Gastrocnemius medialis (tissue), 4 donors: ENCODE measurements at regions of chr2 and their contacts with region 1.

Region 1: DNA sequence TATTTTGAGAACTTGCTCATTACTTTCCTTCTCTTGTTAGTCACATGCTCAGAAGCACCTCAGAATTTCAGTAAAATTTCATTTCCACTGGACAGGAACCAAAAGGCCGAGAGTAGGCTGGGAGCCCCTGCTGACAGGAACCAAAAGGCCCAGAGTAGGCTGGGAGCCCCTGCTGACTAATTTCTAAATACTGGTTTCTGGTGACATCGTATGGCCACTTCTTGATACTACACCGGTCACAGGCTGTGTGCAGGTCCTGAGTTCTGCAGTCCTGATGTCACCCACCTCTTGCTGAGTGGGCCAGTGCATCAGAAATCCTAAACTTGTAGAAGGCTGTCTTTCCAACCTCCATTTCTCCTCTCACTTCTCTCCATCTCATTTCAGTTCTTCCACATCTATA is 17.7 kb upstream of the EN1 start:
- DNase-seq: no peak
- ATAC-seq: peak; percentile 91 to 97
- H3K4me3 ChIP-seq: no peak overlapping the region
- H3K27ac ChIP-seq: no peak overlapping the region
- H3K4me1 ChIP-seq: no peaks in the 10 kb centered on the region
- H3K27me3 ChIP-seq: no peaks in the 10 kb centered on the region
- CTCF ChIP-seq: peak; percentile 47 to 70 (median 65)
- POLR2A ChIP-seq: no peak

Region 2: GRCh38 chr2:118032169-118033013 is 832.7 kb before region 1 on chr2:
- in situ Hi-C with region 1: loop called (anchors 10 to 25 kb)
- intact Hi-C with region 1: loop called (anchors 5 kb)
- DNase-seq: no peak
- ATAC-seq: peak; percentile 39 to 69
- H3K4me3 ChIP-seq: no peak overlapping the region
- H3K27ac ChIP-seq: no peak overlapping the region
- H3K4me1 ChIP-seq: no peaks in the 10 kb centered on the region
- H3K27me3 ChIP-seq: peaks cover 0 to 4% (median 0%) of the 10 kb centered on the region in 3 donors
- CTCF ChIP-seq: peak; percentile 33 to 71 (median 57)
- POLR2A ChIP-seq: no peak

Region 3: GRCh38 chr2:118046634-118047210 is 818.4 kb before region 1 on chr2:
- in situ Hi-C with region 1: loop called in 3 of 4 experiments (anchors 25 kb)
- intact Hi-C with region 1: loop called (anchors 5 kb)
- DNase-seq: no peak
- ATAC-seq: peak; percentile 47 to 56
- H3K4me3 ChIP-seq: peak overlapping the region in 1 of 4 donors; percentile 16
- H3K27ac ChIP-seq: no peak overlapping the region
- H3K4me1 ChIP-seq: no peaks in the 10 kb centered on the region
- H3K27me3 ChIP-seq: peaks cover 0 to 2% (median 0%) of the 10 kb centered on the region in 3 donors
- CTCF ChIP-seq: peak in 3 of 5 experiments; percentile 24 to 49 (median 47)
- POLR2A ChIP-seq: no peak

Region 4: DNA sequence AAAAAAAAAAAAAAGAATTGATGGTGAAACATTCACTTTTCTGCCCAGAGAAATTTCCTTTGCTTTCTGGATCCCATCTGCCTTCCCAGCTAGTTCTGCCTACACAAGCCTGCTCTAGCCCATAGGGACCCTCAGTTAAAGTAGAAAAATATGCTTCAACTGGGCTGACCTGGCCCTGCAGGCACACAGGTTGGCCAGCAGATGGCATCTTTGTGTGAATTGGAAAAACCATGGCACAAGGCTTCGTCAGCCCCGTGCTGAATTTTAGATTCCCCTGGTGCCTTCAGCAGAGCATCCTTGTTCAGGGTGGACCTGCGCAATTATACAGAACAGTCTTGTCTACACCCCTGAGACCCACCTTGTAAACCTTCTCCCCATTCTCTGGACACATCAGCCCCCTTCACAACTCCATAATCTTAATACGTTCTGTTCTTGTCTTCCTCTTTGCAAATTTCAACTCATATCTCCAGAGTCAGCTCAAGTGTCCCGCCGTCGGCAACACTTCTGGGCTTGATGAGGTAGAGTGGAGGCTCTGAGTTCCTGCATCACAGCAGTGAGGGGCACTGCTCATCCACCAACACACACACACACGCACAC is 662.3 kb before region 1 on chr2:
- in situ Hi-C with region 1: loop called in 1 of 4 experiments (anchors 10 kb)
- intact Hi-C with region 1: loop called (anchors 1 kb)
- DNase-seq: peak in 1 of 2 donors; percentile 34
- ATAC-seq: peak in 1 of 2 donors; percentile 78
- H3K4me3 ChIP-seq: no peak overlapping the region
- H3K27ac ChIP-seq: no peak overlapping the region
- H3K4me1 ChIP-seq: no peaks in the 10 kb centered on the region
- H3K27me3 ChIP-seq: no peaks in the 10 kb centered on the region
- CTCF ChIP-seq: peak; percentile 54 to 77 (median 61)
- POLR2A ChIP-seq: no peak

Region 5: GRCh38 chr2:118371515-118371914 is 493.6 kb before region 1 on chr2:
- in situ Hi-C with region 1: no loop called
- intact Hi-C with region 1: loop called (anchors 5 kb)
- DNase-seq: no peak
- ATAC-seq: no peak
- H3K4me3 ChIP-seq: no peak overlapping the region
- H3K27ac ChIP-seq: no peak overlapping the region
- H3K4me1 ChIP-seq: no peaks in the 10 kb centered on the region
- H3K27me3 ChIP-seq: no peaks in the 10 kb centered on the region
- CTCF ChIP-seq: peak in 3 of 5 experiments; percentile 12 to 42 (median 21)
- POLR2A ChIP-seq: no peak

Region 6: DNA sequence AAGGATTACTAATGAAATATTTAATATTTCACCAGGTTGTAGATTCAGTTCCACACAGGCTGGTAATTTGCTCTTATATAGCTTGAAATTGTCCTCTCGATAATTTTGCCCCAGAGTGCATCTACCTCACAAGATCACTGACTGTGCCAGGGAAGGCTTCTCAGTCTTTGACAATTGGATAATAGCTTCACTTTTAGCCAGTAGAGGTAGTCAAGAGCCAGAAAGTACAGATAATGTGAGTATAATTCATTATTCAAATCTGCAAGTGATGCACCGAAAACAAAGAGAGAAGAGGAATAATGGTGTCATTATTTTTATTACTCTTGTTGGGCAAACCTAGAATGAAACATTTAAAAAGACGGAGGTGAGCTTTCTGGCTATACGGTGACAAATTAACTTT is 310.5 kb before region 1 on chr2:
- in situ Hi-C with region 1: no loop called
- intact Hi-C with region 1: no loop called
- DNase-seq: no peak
- ATAC-seq: no peak
- H3K4me3 ChIP-seq: no peak overlapping the region
- H3K27ac ChIP-seq: no peak overlapping the region
- H3K4me1 ChIP-seq: no peaks in the 10 kb centered on the region
- H3K27me3 ChIP-seq: no peaks in the 10 kb centered on the region
- CTCF ChIP-seq: no peak
- POLR2A ChIP-seq: no peak

Region 7: DNA sequence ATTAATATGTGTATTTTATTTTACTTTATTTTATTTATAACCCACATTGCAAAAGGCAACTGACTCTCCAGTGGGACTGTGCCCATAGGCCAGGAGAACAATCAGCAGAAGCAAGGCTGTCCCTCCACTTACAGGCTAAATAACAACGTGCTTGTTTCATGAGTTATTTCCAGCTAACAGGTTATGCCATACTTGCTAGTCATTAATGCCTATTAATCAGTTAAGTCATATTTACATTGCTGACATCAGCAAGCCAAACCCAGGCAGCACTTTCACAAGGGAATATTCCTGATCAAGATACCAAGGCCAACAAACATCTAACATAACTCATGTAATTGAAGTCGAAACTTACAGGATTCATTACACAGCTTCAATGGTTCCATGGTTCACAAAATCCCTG is 109.7 kb before region 1 on chr2:
- in situ Hi-C with region 1: loop called in 2 of 4 experiments (anchors 5 kb)
- intact Hi-C with region 1: no loop called
- DNase-seq: no peak
- ATAC-seq: no peak
- H3K4me3 ChIP-seq: no peak overlapping the region
- H3K27ac ChIP-seq: no peak overlapping the region
- H3K4me1 ChIP-seq: no peaks in the 10 kb centered on the region
- H3K27me3 ChIP-seq: no peaks in the 10 kb centered on the region
- CTCF ChIP-seq: no peak
- POLR2A ChIP-seq: no peak

Region 8: GRCh38 chr2:118763797-118764196 is 101.3 kb before region 1 on chr2:
- in situ Hi-C with region 1: loop called in 2 of 4 experiments (anchors 5 kb)
- intact Hi-C with region 1: no loop called
- DNase-seq: peak; percentile 20 to 55
- ATAC-seq: peak; percentile 98 to 100
- H3K4me3 ChIP-seq: peak overlapping the region; percentile 24 to 48 (median 34)
- H3K27ac ChIP-seq: peak overlapping the region; percentile 50 to 64 (median 63)
- H3K4me1 ChIP-seq: no peaks in the 10 kb centered on the region
- H3K27me3 ChIP-seq: no peaks in the 10 kb centered on the region
- CTCF ChIP-seq: peak; percentile 67 to 78 (median 70)
- POLR2A ChIP-seq: no peak